ENCODE measurements at regions of chrX and their contacts with region 1.

Region 1: DNA sequence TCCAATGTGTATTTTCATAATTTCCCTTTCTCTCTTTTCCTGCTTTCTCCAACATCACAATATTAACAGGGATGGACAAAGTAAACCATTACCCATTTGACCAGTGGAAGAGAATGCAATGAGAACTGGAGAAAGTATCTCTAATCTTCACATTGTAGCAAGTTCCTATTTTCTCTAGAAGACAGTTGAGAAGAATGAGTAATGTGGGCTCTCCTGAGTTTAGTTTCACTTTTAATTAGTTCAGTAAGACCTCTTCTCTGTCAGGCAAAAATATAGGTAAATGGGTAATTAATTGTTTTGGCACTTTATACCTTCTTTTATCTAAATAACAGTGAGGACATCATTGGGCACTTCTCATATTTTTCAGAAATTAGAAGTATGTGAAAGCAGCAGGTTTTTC is 602.0 kb downstream of the GLUD2 start:
- DNase-seq: no peak
- H3K4me3 ChIP-seq: no peak overlapping the region
- CTCF ChIP-seq: no peak

Region 2: GRCh38 chrX:121562616-121563015 is 86.8 kb before region 1 on chrX:
- in situ Hi-C with region 1: loop called (anchors 5 kb)
- DNase-seq: no peak
- H3K4me3 ChIP-seq: no peak overlapping the region
- CTCF ChIP-seq: no peak